HAP-1 (cell line): ENCODE measurements at regions of chr13 and their contacts with region 1.

Region 1: DNA sequence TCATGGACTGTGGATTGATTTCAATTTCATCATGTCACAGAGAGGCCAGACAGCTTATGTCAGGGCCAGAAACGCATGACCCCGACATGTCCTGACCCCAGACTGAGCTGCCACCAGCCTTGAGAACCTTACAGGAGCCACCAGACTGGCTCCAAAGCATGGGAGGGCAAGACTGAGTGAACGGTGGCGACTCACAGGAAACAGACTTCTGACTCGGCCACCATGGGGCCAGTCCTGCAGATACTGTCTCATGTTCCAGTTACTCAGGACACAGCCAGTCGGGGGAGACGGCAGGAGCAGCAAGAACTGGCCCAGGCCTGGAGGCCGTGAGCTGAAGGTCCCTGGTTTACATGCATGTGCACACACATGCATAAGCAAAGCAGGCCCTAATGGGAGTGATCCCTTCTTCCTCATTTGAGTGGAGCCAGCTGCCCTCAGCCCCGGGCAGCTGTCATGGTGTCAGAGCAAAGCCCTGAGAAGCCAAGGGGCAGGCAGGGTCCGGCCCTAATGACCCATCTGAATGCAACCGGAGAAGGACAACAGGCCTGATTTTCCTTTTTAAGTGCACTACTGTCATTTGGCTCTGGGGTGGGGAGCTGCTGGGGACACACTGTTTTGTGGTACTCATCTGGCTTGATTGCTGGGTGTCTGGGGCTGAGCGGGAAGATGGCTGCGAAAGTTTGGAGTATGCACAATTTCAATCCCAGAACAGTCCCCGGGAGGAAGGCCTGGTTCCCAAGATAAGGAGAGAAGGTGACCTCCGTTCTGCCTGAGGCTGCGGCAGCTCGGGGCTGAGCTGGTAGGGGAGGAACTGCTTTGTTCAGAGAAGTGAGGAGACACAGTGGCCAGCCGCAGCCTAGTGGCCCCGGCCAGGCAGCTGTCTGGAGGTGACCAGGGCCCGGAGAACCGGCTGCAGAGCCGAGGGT is 81.8 kb downstream of the SLC7A1 start:
- DNase-seq: no peak
- H3K4me3 ChIP-seq: no peak overlapping the region
- H3K4me1 ChIP-seq: no peaks in the 10 kb centered on the region
- H3K27me3 ChIP-seq: no peaks in the 10 kb centered on the region

Region 2: DNA sequence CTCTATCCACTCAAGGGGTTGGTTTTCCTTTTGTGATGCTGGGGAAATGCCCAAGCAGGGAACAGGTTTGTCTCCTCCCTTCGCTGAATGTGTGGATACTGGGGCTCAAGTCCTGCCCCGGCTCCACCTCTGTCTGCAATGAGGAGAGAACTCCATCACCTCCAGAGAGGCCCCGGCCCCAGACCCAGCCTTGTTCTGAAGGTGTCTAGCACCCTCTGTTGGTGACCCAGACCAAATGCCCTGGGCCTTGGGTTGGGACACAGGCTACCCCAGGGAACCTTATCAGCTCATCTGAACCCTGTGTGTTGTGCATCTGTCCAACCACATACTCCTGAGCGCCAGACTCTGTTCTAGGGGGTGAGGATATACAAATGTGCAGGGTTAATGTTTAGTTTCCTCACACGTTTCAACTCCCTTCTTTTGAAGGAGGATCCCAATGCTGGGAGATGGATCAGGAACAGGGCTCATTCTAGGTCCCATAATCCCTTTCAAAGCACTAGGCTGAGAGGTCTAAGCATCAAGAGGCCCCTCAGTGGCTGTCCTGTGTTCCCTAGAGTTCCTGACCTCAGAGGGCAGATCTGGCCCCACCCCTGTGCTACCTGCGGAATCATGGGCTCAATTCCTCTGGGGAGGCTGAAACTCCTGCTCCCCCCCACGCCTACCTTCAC is 194.3 kb after region 1 on chr13:
- in situ Hi-C with region 1: loop called (anchors 10 kb)
- DNase-seq: peak; percentile 34 to 68
- H3K4me3 ChIP-seq: no peak overlapping the region
- H3K4me1 ChIP-seq: no peaks in the 10 kb centered on the region
- H3K27me3 ChIP-seq: no peaks in the 10 kb centered on the region; the same call in 1 of the 2 replicates